ENCODE measurements at regions of chr17 and their contacts with region 1.

Region 1: DNA sequence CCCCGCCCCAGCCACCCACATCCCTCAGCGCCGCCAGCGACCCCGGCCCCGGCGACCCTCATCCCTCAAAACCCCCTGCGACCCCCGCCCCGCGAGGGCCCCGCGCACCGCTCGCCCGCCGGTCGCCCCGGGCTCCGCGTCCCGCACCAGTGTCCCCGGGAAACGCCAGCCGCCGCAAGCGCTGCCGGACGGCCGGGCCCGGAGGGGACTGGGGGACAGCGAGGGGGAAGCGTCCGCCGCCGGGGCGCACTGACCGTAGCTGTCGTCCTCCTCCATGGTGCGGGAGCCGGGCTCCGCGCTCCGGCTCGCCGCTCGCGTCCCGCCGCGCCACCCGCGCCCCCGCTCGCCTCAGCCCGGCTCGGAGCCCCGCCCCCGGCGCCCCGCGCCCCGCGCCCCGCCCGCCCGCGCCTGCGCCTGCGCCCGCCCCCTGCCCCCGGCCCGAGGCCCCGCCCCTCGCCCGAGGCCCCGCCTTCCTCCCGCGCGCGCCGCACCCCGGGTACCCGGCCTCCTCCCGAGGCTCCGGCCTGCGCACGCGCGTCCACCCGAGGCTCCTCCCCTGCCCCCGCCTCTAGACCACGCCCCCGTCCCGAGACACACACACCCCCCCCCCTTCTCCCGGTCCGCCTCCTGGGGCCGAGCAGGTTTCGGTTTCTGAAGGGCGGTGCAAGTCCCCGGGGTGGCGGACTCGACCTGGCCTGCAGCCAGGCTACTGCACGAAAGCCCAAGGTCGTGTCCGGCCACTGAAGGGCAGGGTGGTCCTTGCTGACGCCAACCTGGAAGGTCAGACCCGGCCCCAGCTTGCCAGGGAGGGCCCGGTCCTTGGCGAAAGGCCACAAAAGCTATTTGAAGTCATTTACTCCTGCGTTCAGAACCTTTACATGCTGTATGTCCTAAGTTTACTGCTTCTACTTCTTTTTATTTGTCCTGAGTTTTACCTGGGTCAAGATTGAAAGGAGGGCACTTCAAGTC is at the start of gene CYTH1:
- DNase-seq: peak; percentile 95
- ATAC-seq: peak; percentile 70
- H3K4me3 ChIP-seq: peak within 1 kb of the TSS; percentile 96
- H3K27ac ChIP-seq: peak within 1 kb of the TSS; percentile 58
- H3K4me1 ChIP-seq: peaks cover 14% of the 10 kb centered on the region
- H3K27me3 ChIP-seq: no peaks in the 10 kb centered on the region
- CTCF ChIP-seq: no peak
- total RNA-seq, gene CYTH1: 29.7 and 37.7 TPM in 2 replicates

Region 2: DNA sequence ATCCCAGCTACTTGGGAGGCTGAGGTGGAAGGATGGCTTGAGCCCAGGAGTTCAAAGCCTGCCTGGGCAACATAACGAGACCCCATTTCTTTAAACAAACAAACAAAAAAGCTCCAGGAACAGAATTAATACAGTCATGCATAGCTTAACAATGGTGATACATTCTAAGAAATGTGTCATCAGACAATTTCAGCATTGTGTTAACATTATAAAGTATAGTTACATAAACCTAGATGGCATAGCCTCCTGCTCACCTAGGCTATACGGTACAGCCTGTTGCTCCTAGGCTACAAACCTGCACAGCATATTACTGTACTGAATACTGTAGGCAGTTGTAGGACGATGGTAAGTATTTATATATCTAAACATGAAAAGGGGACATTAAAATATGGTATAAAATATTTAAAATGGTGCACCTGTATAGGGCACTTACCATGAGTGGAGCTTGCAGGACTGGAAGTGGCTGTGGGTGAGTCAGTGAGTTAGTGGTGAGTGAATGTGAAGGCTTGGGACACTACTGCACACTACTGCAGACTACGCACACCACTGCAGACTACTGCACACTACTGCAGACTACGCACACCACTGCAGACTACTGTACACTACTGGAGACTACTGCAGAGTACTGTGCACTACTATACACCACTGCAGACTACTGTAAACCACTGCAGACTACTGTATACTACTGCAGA is 728.3 kb before region 1 on chr17:
- CTCF ChIA-PET with region 1: no interaction called
- POLR2A ChIA-PET with region 1: interaction called, 10 read pairs
- intact Hi-C with region 1: no loop called
- DNase-seq: peak; percentile 80
- ATAC-seq: peak; percentile 90
- H3K4me3 ChIP-seq: no peak overlapping the region
- H3K27ac ChIP-seq: peak overlapping the region; percentile 42
- H3K4me1 ChIP-seq: peaks cover 17% of the 10 kb centered on the region
- H3K27me3 ChIP-seq: no peaks in the 10 kb centered on the region
- CTCF ChIP-seq: no peak

Region 3: DNA sequence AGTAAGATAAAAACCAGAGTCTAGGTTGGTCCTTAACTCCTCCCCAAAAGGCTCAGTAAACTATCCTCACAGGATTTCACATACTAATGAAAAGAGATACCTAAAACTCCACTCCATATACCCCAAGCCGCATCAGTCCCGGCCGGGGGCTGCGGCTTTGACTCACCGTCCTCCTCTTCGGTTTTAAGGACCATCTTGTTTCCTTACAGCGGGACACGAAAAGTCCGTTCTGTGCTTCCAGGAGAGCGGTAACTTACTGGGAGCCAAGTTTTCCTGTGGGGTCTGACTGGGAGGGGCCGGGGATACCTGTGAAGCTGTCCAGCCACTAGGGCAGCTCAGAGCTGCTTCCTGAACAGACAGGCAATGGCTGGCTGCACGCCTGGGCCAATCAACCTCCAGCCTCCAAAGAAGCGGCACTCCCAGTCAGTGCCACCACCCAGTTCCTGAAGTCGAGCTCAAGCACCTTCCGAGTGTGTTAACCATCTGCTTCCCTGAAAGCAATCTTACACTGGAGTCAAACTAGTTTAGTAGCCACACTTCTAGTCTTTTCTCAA is 45.6 kb before region 1 on chr17:
- CTCF ChIA-PET with region 1: interaction called, 3 read pairs
- POLR2A ChIA-PET with region 1: no interaction called
- intact Hi-C with region 1: loop called (anchors 5 kb)
- DNase-seq: peak; percentile 93
- ATAC-seq: peak; percentile 92
- H3K4me3 ChIP-seq: peak overlapping the region; percentile 74
- H3K27ac ChIP-seq: peak overlapping the region; percentile 75
- H3K4me1 ChIP-seq: peaks cover 29% of the 10 kb centered on the region
- H3K27me3 ChIP-seq: no peaks in the 10 kb centered on the region
- CTCF ChIP-seq: no peak; the same call in 1 of the 2 replicates

Region 4: DNA sequence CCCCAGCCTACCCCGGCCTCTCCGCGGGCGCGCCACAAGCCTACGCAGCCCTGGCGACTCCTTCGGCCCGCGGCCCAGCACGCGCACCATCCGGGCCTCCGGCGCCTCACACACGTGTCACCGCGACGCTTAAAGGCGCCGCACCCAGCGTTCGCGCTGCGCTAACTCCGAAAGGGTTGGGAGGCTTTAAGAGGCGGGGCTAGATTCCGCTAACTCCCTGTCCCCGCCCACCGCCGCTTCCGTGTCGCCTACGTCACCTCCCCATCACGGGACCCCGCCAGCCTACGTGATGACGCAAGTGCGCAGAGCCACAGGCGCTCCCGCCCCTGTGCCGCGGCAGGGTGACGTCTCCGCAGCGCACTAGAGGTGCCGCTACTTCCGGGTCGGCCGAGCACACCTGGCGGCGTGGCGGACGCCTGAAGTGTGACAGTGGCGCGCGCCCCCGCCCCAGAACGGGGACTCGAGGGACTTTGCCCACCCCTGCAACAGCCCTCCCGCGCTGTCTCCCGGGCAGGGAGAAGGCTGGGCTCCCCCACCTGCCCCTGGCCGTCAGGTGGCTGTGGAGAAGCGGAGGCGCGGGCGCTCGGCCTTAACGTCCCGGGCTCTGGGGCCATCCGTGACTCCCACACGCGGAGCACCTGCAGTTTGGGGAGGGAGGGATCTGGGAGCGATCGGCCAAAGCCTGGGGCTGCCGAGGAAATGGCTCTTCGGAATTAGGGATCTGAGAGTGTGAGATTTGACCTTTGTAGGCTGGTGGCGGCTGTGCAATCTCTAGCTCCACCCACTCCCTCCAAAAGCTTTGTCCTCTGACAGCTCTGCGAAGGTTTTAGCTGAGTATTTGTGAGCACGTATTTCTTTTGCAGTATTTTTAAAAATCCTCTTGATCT is 58.7 kb after region 1 on chr17 and contains the start of gene USP36:
- CTCF ChIA-PET with region 1: no interaction called
- POLR2A ChIA-PET with region 1: no interaction called
- intact Hi-C with region 1: loop called (anchors 10 kb)
- DNase-seq: peak; percentile 100
- ATAC-seq: peak; percentile 82
- H3K4me3 ChIP-seq: peak within 1 kb of the TSS; percentile 77
- H3K27ac ChIP-seq: peak within 1 kb of the TSS; percentile 84
- H3K4me1 ChIP-seq: peaks cover 39% of the 10 kb centered on the region
- H3K27me3 ChIP-seq: no peaks in the 10 kb centered on the region
- CTCF ChIP-seq: no peak
- total RNA-seq, gene USP36: 37.5 and 41.8 TPM in 2 replicates

Measured in PC-3 (cell line).